Heart left ventricle (tissue), 16 donors: ENCODE measurements at regions of chr6 and their contacts with region 1.

Region 1: GRCh38 chr6:142838821-142839685 is 105.9 kb downstream of the HIVEP2 start:
- DNase-seq: no peak
- ATAC-seq: no peak
- H3K4me3 ChIP-seq: no peak overlapping the region
- H3K27ac ChIP-seq: no peak overlapping the region
- H3K4me1 ChIP-seq: peaks cover 1 to 50% (median 36%) of the 10 kb centered on the region in 12 donors
- H3K27me3 ChIP-seq: no peaks in the 10 kb centered on the region
- CTCF ChIP-seq: no peak
- POLR2A ChIP-seq: no peak

Region 2: GRCh38 chr6:142926494-142927270 is 87.6 kb after region 1 on chr6:
- intact Hi-C with region 1: loop called in 1 of 10 experiments (anchors 5 kb)
- DNase-seq: peak; percentile 91 to 94 (median 93)
- ATAC-seq: peak; percentile 79 to 95 (median 93)
- H3K4me3 ChIP-seq: peak overlapping the region; percentile 49 to 87 (median 68)
- H3K27ac ChIP-seq: peak overlapping the region; percentile 92 to 98 (median 96)
- H3K4me1 ChIP-seq: peaks cover 7 to 47% (median 32%) of the 10 kb centered on the region in 12 donors
- H3K27me3 ChIP-seq: no peaks in the 10 kb centered on the region
- CTCF ChIP-seq: no peak
- POLR2A ChIP-seq: peak in 1 of 2 donors; percentile 48